ENCODE measurements at regions of chr17 and their contacts with region 1.

Region 1: DNA sequence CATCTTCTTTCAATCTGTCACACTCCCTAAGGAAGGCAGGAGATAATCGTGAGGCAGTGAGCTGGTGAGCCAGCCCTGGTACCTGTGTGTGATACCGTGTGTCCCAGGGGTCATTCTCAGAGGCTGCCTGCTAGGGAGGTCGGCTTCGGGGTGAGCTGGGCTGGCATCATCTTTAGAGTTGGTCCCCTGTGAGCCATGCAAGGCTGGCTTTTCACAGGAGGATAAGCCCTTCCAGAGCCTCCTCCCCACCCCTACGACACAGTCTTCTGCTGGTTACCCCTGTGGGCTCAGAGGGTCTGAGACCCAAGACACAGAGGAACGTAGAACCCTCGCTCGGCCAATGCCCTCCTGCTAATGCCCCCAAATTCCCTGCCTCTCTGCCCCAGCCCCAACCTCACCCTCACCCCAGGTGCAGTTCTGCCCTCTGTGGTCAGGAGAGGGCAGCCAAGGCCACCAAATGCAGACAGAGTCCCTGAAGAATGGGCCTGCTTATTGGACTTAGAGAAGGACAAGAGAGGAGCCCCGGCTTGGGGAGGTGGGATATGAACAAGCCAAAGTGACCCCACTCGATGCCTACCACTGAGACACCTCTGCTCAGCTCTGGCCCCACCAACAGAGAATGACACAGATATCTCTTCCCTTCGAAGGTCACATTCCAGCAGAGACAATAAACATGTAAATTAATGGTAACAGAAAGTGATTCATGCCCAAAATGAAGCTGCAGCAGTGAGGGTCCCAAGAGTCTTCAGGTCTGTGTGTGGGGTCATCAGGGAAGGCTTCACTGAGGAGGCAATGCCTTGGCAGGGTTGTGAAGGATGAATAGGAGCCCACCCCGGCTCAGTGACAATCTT is 80.8 kb upstream of the CCL1 start:
- DNase-seq: peak; percentile 76
- H3K4me3 ChIP-seq: no peak overlapping the region; a peak in 1 of 4 replicates
- H3K27ac ChIP-seq: no peak overlapping the region
- H3K4me1 ChIP-seq: no peaks in the 10 kb centered on the region
- H3K27me3 ChIP-seq: no peaks in the 10 kb centered on the region
- CTCF ChIP-seq: peak; percentile 37
- EP300 ChIP-seq: no peak
- RAD21 ChIP-seq: peak; percentile 83

Region 2: DNA sequence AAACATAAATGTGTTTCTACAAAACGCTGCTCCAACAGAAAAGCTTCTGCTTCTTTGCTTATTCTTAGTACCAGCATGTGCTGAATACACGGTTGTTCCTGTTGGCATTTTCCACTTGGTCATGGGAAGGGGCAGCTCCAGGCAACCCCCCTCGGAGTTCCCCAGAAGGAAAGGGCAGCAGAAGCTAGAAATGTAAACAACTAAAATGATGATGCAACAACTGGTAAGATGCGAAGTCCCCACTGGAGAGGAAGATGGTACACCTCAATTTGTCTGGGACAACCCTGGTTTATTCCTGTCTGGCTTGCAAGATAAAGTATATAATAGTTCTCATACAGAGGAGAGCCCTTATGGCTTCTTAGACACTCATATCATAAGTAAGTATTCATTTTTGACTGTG is 96.8 kb before region 1 on chr17:
- CTCF ChIA-PET with region 1: no interaction called
- POLR2A ChIA-PET with region 1: no interaction called
- DNase-seq: no peak
- H3K4me3 ChIP-seq: no peak overlapping the region
- H3K27ac ChIP-seq: no peak overlapping the region
- H3K4me1 ChIP-seq: no peaks in the 10 kb centered on the region
- H3K27me3 ChIP-seq: no peaks in the 10 kb centered on the region
- CTCF ChIP-seq: no peak
- EP300 ChIP-seq: no peak
- RAD21 ChIP-seq: no peak

Region 3: GRCh38 chr17:34465789-34466188 is 21.9 kb after region 1 on chr17:
- CTCF ChIA-PET with region 1: interaction called, 12 read pairs
- POLR2A ChIA-PET with region 1: no interaction called
- DNase-seq: no peak
- H3K4me3 ChIP-seq: no peak overlapping the region
- H3K27ac ChIP-seq: no peak overlapping the region
- H3K4me1 ChIP-seq: no peaks in the 10 kb centered on the region
- H3K27me3 ChIP-seq: no peaks in the 10 kb centered on the region
- CTCF ChIP-seq: no peak
- EP300 ChIP-seq: no peak
- RAD21 ChIP-seq: no peak

Region 4: DNA sequence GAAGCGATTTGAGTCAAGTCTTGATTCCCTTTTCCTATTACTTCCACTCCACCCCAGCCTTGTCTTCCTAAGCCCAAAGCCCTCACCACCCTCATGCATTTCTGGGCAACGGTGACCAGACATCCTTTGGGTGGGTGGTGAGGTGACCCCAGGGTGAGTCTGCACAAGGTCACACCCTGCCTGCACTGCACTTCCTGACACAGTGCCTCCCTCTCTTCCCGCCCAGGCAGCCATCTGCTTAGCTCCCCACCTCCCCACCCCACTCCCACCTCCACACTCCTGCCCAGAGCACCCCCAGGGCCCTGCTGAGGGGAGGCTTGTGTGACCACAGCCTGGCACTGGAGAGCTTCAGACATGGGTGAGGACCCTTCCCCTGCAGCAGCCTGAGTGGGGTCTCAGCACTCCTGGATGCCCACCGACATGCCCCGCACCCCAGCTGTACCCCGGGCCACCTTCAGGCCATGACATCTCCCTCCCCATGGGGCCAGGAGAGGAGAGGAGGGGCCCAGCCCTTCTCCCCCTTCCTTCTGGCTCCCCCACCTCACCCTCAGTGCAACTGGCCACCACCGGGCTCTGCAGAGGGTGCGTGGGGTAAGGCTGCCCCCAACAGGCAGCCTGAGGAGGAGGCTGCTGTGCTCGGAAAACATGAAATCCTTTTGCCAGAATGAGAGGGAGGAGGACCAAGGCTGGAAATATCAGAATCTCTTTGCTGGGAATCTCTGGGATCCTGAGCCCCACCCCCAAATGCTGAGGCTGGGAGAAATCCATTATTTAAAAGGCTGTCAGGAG is 448.8 kb after region 1 on chr17:
- CTCF ChIA-PET with region 1: interaction called, 13 read pairs
- POLR2A ChIA-PET with region 1: no interaction called
- DNase-seq: peak; percentile 86
- H3K4me3 ChIP-seq: peak overlapping the region in 1 of 2 experiments; percentile 51; a peak in 1 of 4 replicates
- H3K27ac ChIP-seq: no peak overlapping the region
- H3K4me1 ChIP-seq: no peaks in the 10 kb centered on the region
- H3K27me3 ChIP-seq: no peaks in the 10 kb centered on the region
- CTCF ChIP-seq: peak; percentile 50
- EP300 ChIP-seq: no peak
- RAD21 ChIP-seq: peak; percentile 91

Region 5: DNA sequence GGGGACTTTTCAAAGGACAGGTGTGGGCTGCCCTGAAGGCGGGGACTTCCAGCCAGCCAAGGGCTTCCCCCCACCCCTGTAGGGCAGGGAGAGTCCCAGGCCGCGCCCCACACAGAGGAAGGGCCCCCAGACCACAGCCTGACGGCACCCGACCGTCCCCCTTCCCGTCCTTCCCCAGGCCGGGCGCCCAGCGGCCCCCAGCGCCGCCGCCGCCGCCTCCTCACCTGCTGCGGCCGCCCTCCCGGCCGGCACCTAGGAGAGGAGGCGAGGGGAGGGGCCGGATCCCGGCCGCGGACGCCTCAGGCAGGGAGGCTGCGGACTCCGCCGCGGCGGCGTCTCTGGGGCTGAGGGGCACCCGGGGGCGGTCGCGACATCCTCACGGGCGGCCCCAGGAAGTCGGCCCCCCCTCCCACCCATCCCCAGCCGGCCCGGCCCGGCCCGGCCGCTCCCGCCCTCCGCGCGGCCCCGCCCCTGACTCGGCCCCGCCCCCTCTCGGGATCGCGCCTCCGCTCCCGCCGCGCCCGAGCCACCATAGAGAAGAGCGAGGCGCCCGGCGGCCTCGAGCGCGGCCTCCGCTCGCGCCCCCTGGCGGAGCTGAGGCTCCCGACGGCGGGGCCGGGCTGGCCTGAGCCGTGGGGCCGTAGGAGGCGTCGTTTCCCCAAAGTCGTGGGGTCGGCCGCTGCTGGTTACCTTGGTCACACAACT is 645.2 kb after region 1 on chr17:
- CTCF ChIA-PET with region 1: interaction called, 13 read pairs
- POLR2A ChIA-PET with region 1: no interaction called
- DNase-seq: peak; percentile 96
- H3K4me3 ChIP-seq: peak overlapping the region; percentile 83 to 92
- H3K27ac ChIP-seq: peak overlapping the region; percentile 71 to 81
- H3K4me1 ChIP-seq: peaks cover 12 to 22% of the 10 kb centered on the region in 2 experiments; a peak in 3 of 4 replicates
- H3K27me3 ChIP-seq: no peaks in the 10 kb centered on the region
- CTCF ChIP-seq: peak; percentile 70
- EP300 ChIP-seq: 0 out of 4 replicates have a peak, but pooled peaks of 1 of the 2 experiments have one; percentile 6
- RAD21 ChIP-seq: peak; percentile 57